Esophagus muscularis mucosa (tissue), 4 donors: ENCODE measurements at regions of chr1 and their contacts with region 1.

Region 1: DNA sequence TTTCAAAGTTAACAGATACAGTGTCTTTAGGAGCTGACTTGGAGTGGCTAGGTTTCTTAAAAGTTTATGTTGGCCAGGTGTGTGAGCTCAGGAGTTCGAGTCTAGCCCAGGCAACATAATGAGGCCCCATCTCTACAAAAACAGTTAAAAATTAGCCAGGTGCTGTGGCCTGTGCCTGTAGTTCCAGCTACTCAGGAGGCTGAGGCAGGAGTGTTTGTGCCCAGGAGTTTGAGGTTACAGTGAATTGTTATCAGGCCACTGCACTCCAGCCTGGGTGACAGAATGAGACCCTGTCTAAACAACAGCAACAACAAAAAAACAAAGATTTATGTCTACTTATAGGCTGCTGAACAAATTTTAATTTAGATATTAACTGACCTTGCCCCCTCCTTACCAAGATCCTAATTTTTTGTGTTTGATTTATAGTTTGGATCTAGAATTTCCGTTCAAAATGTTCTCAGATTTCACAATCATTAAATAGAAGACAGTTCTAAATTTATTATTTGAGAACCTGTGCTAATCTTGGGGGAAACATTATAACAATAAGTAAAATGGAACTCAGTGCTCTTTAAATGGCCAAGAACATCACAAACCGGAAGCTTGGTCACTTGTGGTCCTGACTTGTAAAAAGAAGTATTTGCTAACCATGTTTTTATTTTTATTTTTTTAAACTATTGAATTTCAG is 67.8 kb downstream of the POU2F1 start:
- DNase-seq: no peak
- H3K4me3 ChIP-seq: no peak overlapping the region
- H3K27ac ChIP-seq: no peak overlapping the region
- H3K4me1 ChIP-seq: peaks cover 10 to 45% (median 26%) of the 10 kb centered on the region in 4 donors
- H3K27me3 ChIP-seq: no peaks in the 10 kb centered on the region
- CTCF ChIP-seq: no peak
- EP300 ChIP-seq: no peak
- POLR2A ChIP-seq: no peak

Region 2: GRCh38 chr1:167697667-167698141 is 409.2 kb after region 1 on chr1:
- intact Hi-C with region 1: loop called (anchors 10 kb)
- DNase-seq: no peak
- H3K4me3 ChIP-seq: no peak overlapping the region
- H3K27ac ChIP-seq: no peak overlapping the region
- H3K4me1 ChIP-seq: peaks cover 0 to 19% (median 8%) of the 10 kb centered on the region in 4 donors
- H3K27me3 ChIP-seq: no peaks in the 10 kb centered on the region
- CTCF ChIP-seq: no peak
- EP300 ChIP-seq: no peak
- POLR2A ChIP-seq: no peak